Activated CD8-positive, alpha-beta T cell treated with anti-CD3 and anti-CD28 coated beads for 36 hours (primary cell): ENCODE measurements at regions of chr2 and their contacts with region 1.

Region 1: GRCh38 chr2:44479122-44479887 is 117.6 kb downstream of the CAMKMT start:
- DNase-seq: peak; percentile 46
- ATAC-seq: peak; percentile 100
- H3K4me3 Mint-ChIP-seq: no peak overlapping the region
- H3K27ac Mint-ChIP-seq: no peak overlapping the region
- H3K4me1 Mint-ChIP-seq: peaks cover 8% of the 10 kb centered on the region
- H3K27me3 Mint-ChIP-seq: no peaks in the 10 kb centered on the region
- CTCF ChIP-seq: peak; percentile 100

Region 2: DNA sequence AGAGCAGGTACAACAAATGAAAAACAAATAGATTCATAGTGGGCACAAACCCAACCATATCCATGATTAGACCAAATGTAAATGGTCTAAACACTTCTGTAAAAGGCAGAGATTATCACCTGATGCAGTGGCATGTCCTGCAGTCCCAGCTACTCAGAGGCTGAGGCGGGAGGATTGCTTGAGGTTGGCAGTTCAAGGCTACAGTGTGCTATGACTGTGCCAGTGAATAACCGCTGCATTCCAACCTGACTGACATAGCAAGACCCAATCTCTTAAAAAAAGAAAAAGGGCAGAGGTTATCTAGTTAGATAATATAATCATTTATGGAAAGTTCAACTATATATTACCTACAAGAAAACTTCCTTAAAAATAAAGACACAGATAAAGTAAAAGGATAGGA is 225.3 kb before region 1 on chr2:
- CTCF ChIA-PET with region 1: no interaction called
- POLR2A ChIA-PET with region 1: no interaction called
- intact Hi-C with region 1: no loop called
- DNase-seq: no peak
- ATAC-seq: no peak
- H3K4me3 Mint-ChIP-seq: no peak overlapping the region
- H3K27ac Mint-ChIP-seq: no peak overlapping the region
- H3K4me1 Mint-ChIP-seq: no peaks in the 10 kb centered on the region
- H3K27me3 Mint-ChIP-seq: peaks cover under 1% of the 10 kb centered on the region
- CTCF ChIP-seq: no peak

Region 3: GRCh38 chr2:44392338-44392943 is 86.9 kb before region 1 on chr2:
- CTCF ChIA-PET with region 1: interaction called, 55 read pairs
- POLR2A ChIA-PET with region 1: no interaction called
- intact Hi-C with region 1: no loop called
- DNase-seq: peak; percentile 72
- ATAC-seq: no peak
- H3K4me3 Mint-ChIP-seq: no peak overlapping the region
- H3K27ac Mint-ChIP-seq: no peak overlapping the region
- H3K4me1 Mint-ChIP-seq: peaks cover 9% of the 10 kb centered on the region
- H3K27me3 Mint-ChIP-seq: no peaks in the 10 kb centered on the region
- CTCF ChIP-seq: peak; percentile 75

Region 4: DNA sequence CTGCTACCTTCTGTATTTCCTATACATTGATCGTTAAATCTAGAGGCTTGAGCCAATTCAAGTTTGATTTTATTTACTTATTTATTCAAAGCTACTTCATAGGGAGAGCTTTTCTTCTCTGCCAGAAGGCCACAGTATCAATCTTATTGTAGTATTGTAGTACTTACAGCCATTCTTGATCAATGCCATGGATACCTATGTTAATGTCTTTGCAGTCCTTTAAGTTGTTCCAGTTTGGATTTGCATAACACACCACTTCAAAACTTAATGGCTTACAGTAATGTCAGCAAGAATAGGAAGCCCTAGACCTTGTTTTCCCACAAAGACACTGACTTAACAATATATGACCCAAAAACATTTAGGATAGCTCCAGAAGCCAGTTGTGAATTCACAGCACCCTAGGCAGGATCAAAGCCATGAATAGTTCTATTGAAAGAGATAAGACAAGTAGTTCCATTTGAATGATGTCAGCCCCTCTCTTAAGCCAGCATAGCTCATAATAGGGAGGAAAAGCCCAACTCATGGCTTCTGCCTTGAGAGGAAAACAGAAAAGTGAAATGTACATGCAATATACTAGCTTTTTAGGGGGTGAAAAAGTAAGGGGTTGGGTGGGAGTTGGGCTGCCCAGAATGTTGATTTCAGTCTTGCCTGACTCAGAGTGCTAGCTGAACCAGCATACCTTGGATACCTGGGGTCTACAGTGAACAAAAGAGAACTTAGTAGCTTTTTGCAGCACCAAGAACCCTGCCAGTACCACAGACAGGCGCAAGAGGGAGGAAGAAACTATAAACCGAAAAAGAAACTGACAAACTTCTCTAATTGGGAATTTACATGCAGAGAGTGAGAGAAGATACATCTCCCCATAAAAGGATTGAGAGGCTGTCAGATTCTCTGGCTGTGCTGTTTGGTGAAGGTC is 16.1 kb before region 1 on chr2:
- CTCF ChIA-PET with region 1: interaction called, 50 read pairs
- POLR2A ChIA-PET with region 1: no interaction called
- intact Hi-C with region 1: no loop called
- DNase-seq: no peak
- ATAC-seq: no peak
- H3K4me3 Mint-ChIP-seq: no peak overlapping the region
- H3K27ac Mint-ChIP-seq: no peak overlapping the region
- H3K4me1 Mint-ChIP-seq: no peaks in the 10 kb centered on the region
- H3K27me3 Mint-ChIP-seq: no peaks in the 10 kb centered on the region
- CTCF ChIP-seq: no peak

Region 5: DNA sequence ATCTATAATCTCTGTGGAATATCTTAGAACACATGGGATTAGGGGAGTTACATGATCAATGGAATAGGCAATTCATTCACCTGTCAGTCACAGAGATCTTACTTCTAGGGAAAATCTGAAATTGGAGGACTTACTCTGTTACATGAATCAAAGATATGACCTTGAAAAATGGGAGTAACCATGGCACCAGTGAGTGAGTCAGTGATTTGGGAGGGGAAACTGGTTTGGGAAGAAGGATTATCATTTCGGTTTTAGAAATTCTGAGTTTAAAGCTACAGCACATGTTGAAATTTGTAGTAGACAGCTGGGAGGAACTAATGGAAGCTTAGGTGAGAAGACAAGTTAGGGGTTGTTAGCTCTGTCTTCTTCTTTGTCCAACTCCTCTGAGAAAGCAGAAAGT is 36.1 kb after region 1 on chr2:
- CTCF ChIA-PET with region 1: interaction called, 15 read pairs
- POLR2A ChIA-PET with region 1: no interaction called
- intact Hi-C with region 1: no loop called
- DNase-seq: no peak
- ATAC-seq: no peak
- H3K4me3 Mint-ChIP-seq: no peak overlapping the region
- H3K27ac Mint-ChIP-seq: no peak overlapping the region
- H3K4me1 Mint-ChIP-seq: no peaks in the 10 kb centered on the region
- H3K27me3 Mint-ChIP-seq: no peaks in the 10 kb centered on the region
- CTCF ChIP-seq: no peak

Region 6: GRCh38 chr2:44668336-44668735 is 189.0 kb after region 1 on chr2:
- CTCF ChIA-PET with region 1: interaction called, 21 read pairs
- POLR2A ChIA-PET with region 1: no interaction called
- intact Hi-C with region 1: no loop called
- DNase-seq: no peak
- ATAC-seq: no peak
- H3K4me3 Mint-ChIP-seq: no peak overlapping the region
- H3K27ac Mint-ChIP-seq: no peak overlapping the region
- H3K4me1 Mint-ChIP-seq: peaks cover 7% of the 10 kb centered on the region
- H3K27me3 Mint-ChIP-seq: no peaks in the 10 kb centered on the region
- CTCF ChIP-seq: peak; percentile 55

Region 7: GRCh38 chr2:44928483-44929158 is 449.3 kb after region 1 on chr2:
- CTCF ChIA-PET with region 1: interaction called, 17 read pairs
- POLR2A ChIA-PET with region 1: no interaction called
- intact Hi-C with region 1: no loop called
- DNase-seq: no peak
- ATAC-seq: no peak
- H3K4me3 Mint-ChIP-seq: no peak overlapping the region
- H3K27ac Mint-ChIP-seq: no peak overlapping the region
- H3K4me1 Mint-ChIP-seq: peaks cover 16% of the 10 kb centered on the region
- H3K27me3 Mint-ChIP-seq: peaks cover 76% of the 10 kb centered on the region
- CTCF ChIP-seq: no peak